AG04449 (cell line): ENCODE measurements at regions of chr15 and their contacts with region 1.

Region 1: GRCh38 chr15:83380682-83381081 is 66.5 kb upstream of the SH3GL3 start:
- DNase-seq: no peak
- H3K4me3 ChIP-seq: no peak overlapping the region
- CTCF ChIP-seq: peak; percentile 56

Region 2: DNA sequence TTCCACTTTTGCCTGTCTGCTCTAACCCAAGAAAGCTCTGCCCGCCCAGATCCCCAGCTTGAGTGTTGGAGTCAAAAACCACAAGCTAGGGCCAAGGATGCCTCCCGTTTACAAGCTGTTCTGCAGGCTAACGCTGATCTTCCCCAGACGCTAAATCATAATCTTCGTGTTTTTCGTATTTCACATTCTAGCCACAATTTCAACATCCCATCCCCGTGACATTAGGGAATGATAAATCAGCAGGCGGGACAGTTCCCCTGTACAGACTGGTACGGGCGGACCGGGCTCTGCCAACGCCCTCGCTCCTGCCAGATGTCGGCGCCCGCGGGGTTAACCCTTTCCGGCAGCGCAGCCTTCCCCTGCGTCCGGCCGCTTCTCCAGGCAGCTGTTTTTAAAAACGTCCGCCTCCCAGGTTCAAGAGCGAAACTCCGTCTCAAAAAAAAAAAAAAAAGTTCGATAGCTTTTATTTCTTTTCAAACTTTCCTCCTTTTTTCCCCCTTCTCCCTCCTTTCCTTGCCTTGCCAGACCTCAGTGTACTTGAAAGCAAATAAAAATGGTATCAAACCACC is 15.2 kb before region 1 on chr15:
- CTCF ChIA-PET with region 1: interaction called, 10 read pairs
- POLR2A ChIA-PET with region 1: no interaction called
- DNase-seq: peak; percentile 49
- H3K4me3 ChIP-seq: peak overlapping the region; percentile 57
- CTCF ChIP-seq: no peak

Region 3: GRCh38 chr15:83698294-83698693 is 317.6 kb after region 1 on chr15:
- CTCF ChIA-PET with region 1: no interaction called
- POLR2A ChIA-PET with region 1: no interaction called
- DNase-seq: no peak
- H3K4me3 ChIP-seq: no peak overlapping the region
- CTCF ChIP-seq: no peak